ENCODE measurements at regions of chr2 and their contacts with region 1.

Region 1: GRCh38 chr2:100262555-100263320 is 59.6 kb downstream of the LONRF2 start:
- DNase-seq: peak; percentile 56
- ATAC-seq: peak; percentile 82
- H3K4me3 ChIP-seq: no peak overlapping the region
- H3K27ac ChIP-seq: no peak overlapping the region
- H3K4me1 ChIP-seq: peaks cover 4% of the 10 kb centered on the region; the same call in 1 of the 2 replicates
- H3K27me3 ChIP-seq: peaks cover 11% of the 10 kb centered on the region
- CTCF ChIP-seq: peak; percentile 95
- POLR2A ChIP-seq: 0 out of 2 replicates have a peak, but pooled peaks have one; percentile 26
- RAD21 ChIP-seq: peak; percentile 99

Region 2: DNA sequence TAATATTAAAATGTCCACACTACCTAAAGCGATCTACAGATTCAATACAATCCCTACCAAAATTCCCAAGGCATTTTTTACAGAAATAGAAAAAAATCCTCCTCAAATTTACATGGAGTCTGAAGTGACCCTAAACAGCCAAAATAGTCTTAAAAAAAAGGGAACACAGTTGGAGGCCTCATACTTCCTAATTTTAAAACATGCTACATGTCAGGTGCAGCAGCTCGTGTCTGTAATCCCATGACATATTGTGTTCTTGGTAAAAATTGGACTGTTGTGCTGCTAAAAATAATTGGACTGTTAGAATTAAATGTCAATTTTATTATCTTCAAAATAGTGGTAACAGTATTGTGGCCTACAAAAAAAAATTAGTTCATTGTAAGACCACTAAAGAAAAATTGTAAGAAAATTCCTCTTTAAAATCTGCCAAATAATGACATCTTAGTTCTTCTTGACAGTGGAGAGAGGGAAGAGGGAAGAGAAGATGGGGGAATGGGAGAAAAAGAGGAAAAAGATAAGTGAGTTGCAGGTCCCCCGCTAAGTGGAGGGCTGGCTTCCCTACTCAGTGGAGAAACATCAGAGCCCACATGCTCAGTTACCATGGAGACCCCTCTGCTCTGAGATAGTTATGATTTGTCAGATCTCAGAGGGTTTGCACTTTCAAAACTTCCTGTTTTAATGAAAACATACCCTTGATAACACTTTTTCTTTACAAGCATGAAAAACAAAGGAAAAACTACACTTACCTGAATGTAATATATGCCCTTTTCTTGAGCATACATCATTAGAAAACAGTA is 1607.8 kb before region 1 on chr2:
- CTCF ChIA-PET with region 1: no interaction called
- POLR2A ChIA-PET with region 1: no interaction called
- dilution Hi-C with region 1: no loop called
- in situ Hi-C with region 1: no loop called
- intact Hi-C with region 1: loop called (anchors 10 kb)
- DNase-seq: no peak
- ATAC-seq: no peak
- H3K4me3 ChIP-seq: no peak overlapping the region
- H3K27ac ChIP-seq: no peak overlapping the region
- H3K4me1 ChIP-seq: no peaks in the 10 kb centered on the region
- H3K27me3 ChIP-seq: peaks cover 5% of the 10 kb centered on the region
- CTCF ChIP-seq: no peak
- POLR2A ChIP-seq: no peak
- RAD21 ChIP-seq: no peak

Region 3: DNA sequence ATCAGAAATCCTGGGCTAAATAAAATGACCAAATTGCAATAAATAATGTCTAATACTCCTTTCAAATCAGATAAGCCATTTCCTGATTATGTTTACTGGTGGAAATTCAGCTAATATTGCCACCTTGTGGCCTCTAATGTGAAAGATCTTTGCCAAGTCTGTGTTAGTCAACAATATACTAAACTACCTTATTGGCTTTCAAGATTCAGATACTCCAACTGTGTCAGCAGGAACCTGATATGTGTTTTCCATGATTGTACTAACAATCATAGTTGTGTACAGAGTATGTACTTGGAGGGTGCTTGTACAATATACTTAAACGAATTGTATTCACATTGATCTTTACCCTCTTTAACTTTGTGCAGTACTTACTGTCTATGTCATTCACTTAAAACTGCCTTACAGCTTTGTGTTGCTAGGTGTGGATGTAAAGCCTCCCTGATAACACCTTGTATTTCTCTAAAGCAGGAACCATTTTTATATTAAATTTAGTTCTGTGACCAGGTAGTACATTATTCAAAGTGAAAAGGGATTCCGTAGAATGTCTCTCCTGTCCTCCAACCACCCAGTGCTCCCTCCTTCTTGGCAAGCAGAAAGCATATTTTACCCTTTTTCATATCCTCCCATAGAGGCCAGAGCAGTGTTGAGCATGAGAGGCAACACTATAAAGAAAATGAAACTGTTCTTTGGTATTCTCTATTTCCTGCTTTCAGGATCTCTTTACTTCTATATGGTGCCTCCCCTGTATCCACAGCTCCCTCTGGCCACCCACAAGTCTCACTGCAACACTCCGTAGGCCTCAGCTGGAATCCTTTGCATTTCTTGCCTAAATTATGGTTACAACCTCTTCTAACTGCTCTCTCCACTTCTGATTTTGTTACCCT is 1196.4 kb before region 1 on chr2:
- CTCF ChIA-PET with region 1: no interaction called
- POLR2A ChIA-PET with region 1: no interaction called
- dilution Hi-C with region 1: no loop called
- in situ Hi-C with region 1: no loop called
- intact Hi-C with region 1: loop called (anchors 5 kb)
- DNase-seq: peak; percentile 61
- ATAC-seq: peak; percentile 97
- H3K4me3 ChIP-seq: no peak overlapping the region
- H3K27ac ChIP-seq: no peak overlapping the region
- H3K4me1 ChIP-seq: no peaks in the 10 kb centered on the region
- H3K27me3 ChIP-seq: peaks cover 5% of the 10 kb centered on the region
- CTCF ChIP-seq: peak; percentile 60
- POLR2A ChIP-seq: no peak
- RAD21 ChIP-seq: peak; percentile 48

Region 4: GRCh38 chr2:99180755-99181623 is 1081.7 kb before region 1 on chr2 and contains the starts of genes MITD1 and MRPL30:
- CTCF ChIA-PET with region 1: no interaction called
- POLR2A ChIA-PET with region 1: no interaction called
- dilution Hi-C with region 1: no loop called
- in situ Hi-C with region 1: no loop called
- intact Hi-C with region 1: loop called (anchors 1 kb)
- DNase-seq: peak; percentile 96
- ATAC-seq: peak; percentile 97
- H3K4me3 ChIP-seq: peak within 1 kb of the TSS; percentile 75
- H3K27ac ChIP-seq: peak within 1 kb of the TSS; percentile 77
- H3K4me1 ChIP-seq: no peaks in the 10 kb centered on the region; the same call in 1 of the 2 replicates
- H3K27me3 ChIP-seq: no peaks in the 10 kb centered on the region
- CTCF ChIP-seq: no peak
- POLR2A ChIP-seq: peak; percentile 95
- RAD21 ChIP-seq: 0 out of 2 replicates have a peak, but pooled peaks have one; percentile 10
- total RNA-seq, gene MITD1: 4.3 and 19.4 TPM in 2 replicates
- total RNA-seq, gene MRPL30: 34.8 and 39.2 TPM in 2 replicates

Region 5: GRCh38 chr2:99559075-99559662 is 703.6 kb before region 1 on chr2:
- CTCF ChIA-PET with region 1: interaction called, 4 read pairs
- POLR2A ChIA-PET with region 1: no interaction called
- dilution Hi-C with region 1: no loop called
- in situ Hi-C with region 1: no loop called
- intact Hi-C with region 1: loop called (anchors 1 kb)
- DNase-seq: peak; percentile 67
- ATAC-seq: peak; percentile 99
- H3K4me3 ChIP-seq: no peak overlapping the region
- H3K27ac ChIP-seq: no peak overlapping the region
- H3K4me1 ChIP-seq: no peaks in the 10 kb centered on the region
- H3K27me3 ChIP-seq: no peaks in the 10 kb centered on the region
- CTCF ChIP-seq: peak; percentile 97
- POLR2A ChIP-seq: no peak
- RAD21 ChIP-seq: peak; percentile 99

Region 6: GRCh38 chr2:99940963-99941362 is 321.8 kb before region 1 on chr2:
- CTCF ChIA-PET with region 1: no interaction called
- POLR2A ChIA-PET with region 1: no interaction called
- dilution Hi-C with region 1: no loop called
- in situ Hi-C with region 1: no loop called
- intact Hi-C with region 1: no loop called
- DNase-seq: peak; percentile 65
- ATAC-seq: no peak; the same call in 1 of the 2 replicates
- H3K4me3 ChIP-seq: no peak overlapping the region
- H3K27ac ChIP-seq: no peak overlapping the region
- H3K4me1 ChIP-seq: no peaks in the 10 kb centered on the region; the same call in 1 of the 2 replicates
- H3K27me3 ChIP-seq: no peaks in the 10 kb centered on the region
- CTCF ChIP-seq: no peak
- POLR2A ChIP-seq: no peak
- RAD21 ChIP-seq: no peak

Region 7: GRCh38 chr2:100291120-100291970 is 28.6 kb after region 1 on chr2:
- CTCF ChIA-PET with region 1: interaction called, 12 read pairs
- POLR2A ChIA-PET with region 1: no interaction called
- dilution Hi-C with region 1: no loop called
- in situ Hi-C with region 1: no loop called
- intact Hi-C with region 1: no loop called
- DNase-seq: peak; percentile 99
- ATAC-seq: peak; percentile 93
- H3K4me3 ChIP-seq: no peak overlapping the region
- H3K27ac ChIP-seq: peak overlapping the region; percentile 44
- H3K4me1 ChIP-seq: peaks cover 12% of the 10 kb centered on the region
- H3K27me3 ChIP-seq: peaks cover 1% of the 10 kb centered on the region; the same call in 1 of the 2 replicates
- CTCF ChIP-seq: no peak
- POLR2A ChIP-seq: peak; percentile 34; the same call in 1 of the 2 replicates
- RAD21 ChIP-seq: peak; percentile 12; the same call in 1 of the 2 replicates

Region 8: DNA sequence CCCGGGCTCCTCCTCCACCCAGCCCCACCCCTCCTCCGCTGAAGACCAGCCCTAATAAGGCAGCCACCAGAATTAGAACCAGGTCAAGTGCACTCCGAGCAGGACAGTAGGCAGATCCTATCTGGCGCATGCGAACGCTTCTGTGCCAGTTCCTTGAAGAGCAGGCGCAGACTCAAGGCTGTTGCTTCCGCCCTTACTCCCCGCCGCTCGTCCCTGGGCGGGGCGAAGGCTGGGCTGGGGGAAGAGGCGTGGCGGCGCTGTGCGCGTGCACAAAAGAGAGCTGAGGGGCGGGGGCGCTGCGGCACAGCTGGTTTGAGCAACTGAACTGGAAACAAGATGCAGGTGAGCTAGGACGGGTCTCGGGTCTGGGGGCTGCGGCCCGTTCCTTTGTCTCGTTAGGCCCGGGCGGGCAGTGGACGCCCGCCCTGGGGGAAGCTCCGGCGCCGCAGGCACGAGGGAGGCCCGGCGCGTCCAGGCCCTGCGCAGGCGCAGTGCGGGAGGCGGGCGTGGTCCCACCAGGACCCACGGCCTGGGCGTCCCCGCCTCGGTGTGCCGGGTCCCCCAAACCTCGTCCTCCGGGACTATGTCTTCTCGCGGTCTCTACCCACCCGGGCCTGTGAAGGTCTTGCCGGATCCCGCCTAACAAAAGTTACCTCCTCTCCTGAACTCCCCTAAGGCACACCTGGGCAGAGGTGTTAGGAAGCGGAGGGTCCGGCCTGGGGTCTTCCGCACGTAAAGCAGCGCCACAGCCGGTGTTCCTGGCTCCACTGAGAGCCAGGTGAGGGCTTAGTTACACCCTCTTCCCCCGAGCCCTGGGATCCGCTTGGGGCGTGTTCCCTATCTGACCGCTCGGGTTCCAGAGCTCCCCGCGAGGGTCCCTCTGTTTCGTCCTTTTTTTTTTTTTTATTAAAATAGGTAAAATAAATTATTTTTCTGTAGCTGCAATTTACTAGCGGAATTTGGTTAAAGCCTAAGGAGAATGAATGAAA is 300.3 kb after region 1 on chr2 and contains the start of gene PDCL3:
- CTCF ChIA-PET with region 1: no interaction called
- POLR2A ChIA-PET with region 1: no interaction called
- dilution Hi-C with region 1: no loop called
- in situ Hi-C with region 1: no loop called
- intact Hi-C with region 1: loop called (anchors 5 kb)
- DNase-seq: peak; percentile 99
- ATAC-seq: peak; percentile 97
- H3K4me3 ChIP-seq: peak within 1 kb of the TSS; percentile 73
- H3K27ac ChIP-seq: peak within 1 kb of the TSS; percentile 94
- H3K4me1 ChIP-seq: peaks cover 7% of the 10 kb centered on the region
- H3K27me3 ChIP-seq: no peaks in the 10 kb centered on the region
- CTCF ChIP-seq: 0 out of 2 replicates have a peak, but pooled peaks have one; percentile 3
- POLR2A ChIP-seq: no peak; the same call in 1 of the 2 replicates
- RAD21 ChIP-seq: no peak
- total RNA-seq, gene PDCL3: 9.5 and 22.8 TPM in 2 replicates